B cell (primary cell): ENCODE measurements at regions of chr12 and their contacts with region 1.

Region 1: DNA sequence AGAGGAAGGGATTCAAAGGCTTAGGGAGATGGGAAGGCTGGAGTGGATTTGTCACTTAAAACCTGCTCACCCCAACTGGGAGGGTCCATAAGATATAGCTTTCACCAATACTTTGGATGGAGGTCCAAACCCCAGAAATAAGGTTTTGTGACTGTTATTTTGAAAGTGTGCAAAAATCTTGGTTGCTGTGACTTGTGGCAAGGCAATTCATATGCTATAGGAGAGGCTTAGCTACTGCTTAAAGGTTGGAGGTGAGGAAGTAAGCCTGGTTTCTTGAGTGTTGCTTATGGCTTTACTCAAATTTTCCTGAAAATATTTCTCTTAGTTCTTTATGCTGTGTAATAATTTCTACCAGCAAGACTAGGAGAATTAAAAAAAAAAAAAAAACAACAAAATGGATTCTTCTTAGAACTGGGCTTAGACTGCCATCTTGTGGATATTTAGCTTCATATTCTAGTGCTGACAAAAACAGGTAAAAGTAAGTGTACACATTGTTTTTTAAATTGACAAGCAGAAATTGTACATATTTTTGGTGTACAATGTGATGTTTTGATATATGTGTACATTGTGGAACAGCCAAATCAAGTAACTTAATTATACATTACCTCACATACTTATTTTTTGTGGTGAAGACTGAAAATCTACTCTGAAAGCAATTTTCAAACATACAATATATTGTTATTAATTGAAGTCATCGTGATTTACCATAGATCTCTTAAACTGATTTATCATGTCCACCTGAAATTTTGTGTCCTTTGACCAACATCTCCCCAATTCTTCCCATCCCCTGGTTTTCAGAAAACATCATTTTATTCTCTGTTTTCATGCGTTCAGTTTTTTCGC is 23.0 kb downstream of the PDE6H start:
- DNase-seq: peak; percentile 79
- ATAC-seq: peak; percentile 45
- H3K4me3 ChIP-seq: no peak overlapping the region
- H3K4me3 Mint-ChIP-seq: no peak overlapping the region
- H3K27ac ChIP-seq: no peak overlapping the region
- H3K27ac Mint-ChIP-seq: peak overlapping the region; percentile 38
- H3K4me1 ChIP-seq: peaks cover 34 to 36% of the 10 kb centered on the region in 2 donors
- H3K4me1 Mint-ChIP-seq: peaks cover 39% of the 10 kb centered on the region
- H3K27me3 ChIP-seq: peaks cover 0 to 4% (median 1%) of the 10 kb centered on the region in 4 experiments
- H3K27me3 Mint-ChIP-seq: peaks cover 5% of the 10 kb centered on the region
- CTCF ChIP-seq: peak; percentile 83

Region 2: DNA sequence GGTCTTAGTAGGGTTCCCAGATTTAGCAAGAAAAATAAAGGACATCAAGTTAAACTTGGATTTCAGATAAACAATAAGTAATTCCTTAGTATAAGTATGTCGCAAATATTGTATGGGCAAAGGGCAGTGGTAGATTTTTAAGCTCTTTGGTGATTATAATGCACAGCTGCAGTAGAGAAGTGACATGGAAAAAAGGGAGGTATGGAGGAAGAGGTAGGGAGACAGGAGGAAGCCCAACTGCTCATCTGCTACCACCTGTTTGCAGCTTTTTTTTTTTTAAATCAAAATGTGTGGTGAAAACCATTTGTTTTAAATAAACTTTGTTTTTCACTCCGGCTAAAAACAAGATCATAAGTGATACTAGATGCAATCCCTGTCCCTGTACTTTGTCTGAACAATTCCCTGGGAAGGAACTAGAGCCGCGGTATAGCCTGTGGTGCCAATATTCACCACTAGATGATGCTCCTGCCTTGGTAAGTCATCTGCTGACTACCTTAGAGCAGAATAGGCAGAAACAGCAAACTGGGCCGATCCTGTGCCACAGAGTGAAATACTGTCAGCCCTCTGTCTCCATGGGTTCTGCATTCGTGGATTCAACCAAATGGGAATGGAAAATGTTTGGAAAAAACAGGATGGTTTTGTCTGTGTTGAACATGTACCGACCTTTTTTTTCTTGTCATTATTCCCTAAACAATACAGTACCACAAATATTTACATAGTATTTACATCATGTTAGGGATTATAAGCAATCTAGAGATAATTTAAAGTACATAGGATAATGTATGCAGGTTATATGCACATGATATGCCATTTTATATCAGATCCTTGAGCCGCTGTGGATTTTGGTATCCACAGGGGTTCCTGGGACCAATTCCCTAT is 365.7 kb before region 1 on chr12:
- CTCF ChIA-PET with region 1: interaction called, 8 read pairs
- POLR2A ChIA-PET with region 1: no interaction called
- intact Hi-C with region 1: loop called (anchors 5 kb)
- DNase-seq: peak; percentile 77
- ATAC-seq: peak; percentile 100
- H3K4me3 ChIP-seq: no peak overlapping the region
- H3K4me3 Mint-ChIP-seq: no peak overlapping the region
- H3K27ac ChIP-seq: no peak overlapping the region
- H3K27ac Mint-ChIP-seq: no peak overlapping the region
- H3K4me1 ChIP-seq: no peaks in the 10 kb centered on the region
- H3K4me1 Mint-ChIP-seq: no peaks in the 10 kb centered on the region
- H3K27me3 ChIP-seq: no peaks in the 10 kb centered on the region
- H3K27me3 Mint-ChIP-seq: no peaks in the 10 kb centered on the region
- CTCF ChIP-seq: peak; percentile 98

Region 3: DNA sequence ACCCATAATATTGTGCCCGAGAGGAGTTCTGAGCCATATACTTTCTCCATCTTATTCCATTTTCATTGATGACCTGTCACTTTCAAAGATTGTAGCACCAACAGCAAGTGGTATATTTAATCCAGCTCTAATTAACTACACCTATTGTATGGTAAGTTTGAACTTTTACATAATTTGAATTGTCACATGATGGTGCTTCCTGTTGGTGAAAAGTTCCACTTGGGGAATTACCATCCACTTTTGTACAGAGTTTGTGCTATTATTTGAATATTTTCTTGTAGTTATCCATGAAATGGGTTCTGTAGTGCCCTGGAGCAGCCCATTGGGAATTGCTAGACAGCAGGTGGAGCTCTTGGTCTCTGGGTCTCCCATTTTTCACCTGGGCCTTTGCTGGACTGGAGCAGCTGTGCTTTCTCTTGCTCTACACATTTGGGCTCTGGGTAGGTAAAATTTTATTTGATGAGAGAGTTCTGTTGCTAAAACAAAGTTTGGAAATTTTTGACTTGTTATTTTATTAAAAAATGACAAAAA is 184.8 kb before region 1 on chr12:
- CTCF ChIA-PET with region 1: interaction called, 30 read pairs
- POLR2A ChIA-PET with region 1: no interaction called
- intact Hi-C with region 1: no loop called
- DNase-seq: peak; percentile 35
- ATAC-seq: peak; percentile 28
- H3K4me3 ChIP-seq: no peak overlapping the region
- H3K4me3 Mint-ChIP-seq: peak overlapping the region; percentile 68
- H3K27ac ChIP-seq: no peak overlapping the region
- H3K27ac Mint-ChIP-seq: peak overlapping the region; percentile 50
- H3K4me1 ChIP-seq: peaks cover 9 to 16% of the 10 kb centered on the region in 2 donors
- H3K4me1 Mint-ChIP-seq: peaks cover 13% of the 10 kb centered on the region
- H3K27me3 ChIP-seq: no peaks in the 10 kb centered on the region
- H3K27me3 Mint-ChIP-seq: no peaks in the 10 kb centered on the region
- CTCF ChIP-seq: no peak

Region 4: DNA sequence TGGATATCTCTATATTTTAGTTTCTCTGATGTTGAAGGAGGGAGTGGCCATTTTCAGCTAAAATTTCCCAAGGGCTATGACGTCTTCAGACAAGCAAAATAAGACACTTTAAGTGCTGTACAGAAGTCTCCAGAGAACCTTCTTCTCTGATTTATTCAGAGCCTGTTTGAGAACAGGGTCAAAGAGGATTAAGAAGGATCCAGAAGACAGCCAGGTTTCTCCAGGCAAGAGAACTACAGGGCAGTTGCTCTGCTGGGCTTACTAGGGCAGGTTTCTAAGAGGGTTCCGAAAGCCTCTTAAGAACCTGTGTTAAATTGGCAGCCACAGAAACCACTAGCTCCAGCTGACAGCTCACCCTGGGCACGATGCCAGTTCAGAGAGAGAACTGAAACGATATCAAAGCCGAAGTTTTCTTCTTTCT is 111.3 kb before region 1 on chr12:
- CTCF ChIA-PET with region 1: interaction called, 14 read pairs
- POLR2A ChIA-PET with region 1: no interaction called
- intact Hi-C with region 1: no loop called
- DNase-seq: peak; percentile 89
- ATAC-seq: peak; percentile 95
- H3K4me3 ChIP-seq: peak overlapping the region in 1 of 5 experiments; percentile 11
- H3K4me3 Mint-ChIP-seq: peak overlapping the region; percentile 77
- H3K27ac ChIP-seq: peak overlapping the region in 1 of 2 donors; percentile 67
- H3K27ac Mint-ChIP-seq: peak overlapping the region; percentile 80
- H3K4me1 ChIP-seq: peaks cover 27 to 44% of the 10 kb centered on the region in 2 donors
- H3K4me1 Mint-ChIP-seq: peaks cover 48% of the 10 kb centered on the region
- H3K27me3 ChIP-seq: peaks cover 0 to 12% (median 8%) of the 10 kb centered on the region in 4 experiments
- H3K27me3 Mint-ChIP-seq: peaks cover 38% of the 10 kb centered on the region
- CTCF ChIP-seq: no peak

Region 5: GRCh38 chr12:14948672-14949071 is 47.1 kb before region 1 on chr12:
- CTCF ChIA-PET with region 1: interaction called, 12 read pairs
- POLR2A ChIA-PET with region 1: no interaction called
- intact Hi-C with region 1: loop called (anchors 2 kb)
- DNase-seq: peak; percentile 88
- ATAC-seq: peak; percentile 94
- H3K4me3 ChIP-seq: peak overlapping the region in 3 of 5 experiments; percentile 26 to 53 (median 27)
- H3K4me3 Mint-ChIP-seq: peak overlapping the region; percentile 84
- H3K27ac ChIP-seq: peak overlapping the region; percentile 65 to 94
- H3K27ac Mint-ChIP-seq: peak overlapping the region; percentile 97
- H3K4me1 ChIP-seq: peaks cover 61 to 71% of the 10 kb centered on the region in 2 donors
- H3K4me1 Mint-ChIP-seq: peaks cover 72% of the 10 kb centered on the region
- H3K27me3 ChIP-seq: no peaks in the 10 kb centered on the region
- H3K27me3 Mint-ChIP-seq: no peaks in the 10 kb centered on the region
- CTCF ChIP-seq: no peak

Region 6: GRCh38 chr12:15122344-15122743 is 126.5 kb after region 1 on chr12:
- CTCF ChIA-PET with region 1: no interaction called
- POLR2A ChIA-PET with region 1: no interaction called
- intact Hi-C with region 1: no loop called
- DNase-seq: no peak
- ATAC-seq: no peak
- H3K4me3 ChIP-seq: no peak overlapping the region
- H3K4me3 Mint-ChIP-seq: no peak overlapping the region
- H3K27ac ChIP-seq: no peak overlapping the region
- H3K27ac Mint-ChIP-seq: no peak overlapping the region
- H3K4me1 ChIP-seq: no peaks in the 10 kb centered on the region
- H3K4me1 Mint-ChIP-seq: no peaks in the 10 kb centered on the region
- H3K27me3 ChIP-seq: no peaks in the 10 kb centered on the region
- H3K27me3 Mint-ChIP-seq: peaks cover 7% of the 10 kb centered on the region
- CTCF ChIP-seq: no peak

Region 7: GRCh38 chr12:15220994-15221885 is 225.4 kb after region 1 on chr12 and contains the start of gene RERG:
- CTCF ChIA-PET with region 1: interaction called, 15 read pairs
- POLR2A ChIA-PET with region 1: no interaction called
- intact Hi-C with region 1: loop called (anchors 5 kb)
- DNase-seq: peak; percentile 77
- ATAC-seq: peak; percentile 98
- H3K4me3 ChIP-seq: peak within 1 kb of the TSS in 4 of 5 experiments; percentile 29 to 49 (median 41)
- H3K4me3 Mint-ChIP-seq: peak within 1 kb of the TSS; percentile 79
- H3K27ac ChIP-seq: no peak within 1 kb of the TSS
- H3K27ac Mint-ChIP-seq: no peak within 1 kb of the TSS
- H3K4me1 ChIP-seq: peaks cover 11 to 16% of the 10 kb centered on the region in 2 donors
- H3K4me1 Mint-ChIP-seq: peaks cover 14% of the 10 kb centered on the region
- H3K27me3 ChIP-seq: peaks cover 0 to 39% (median 34%) of the 10 kb centered on the region in 4 experiments
- H3K27me3 Mint-ChIP-seq: peaks cover 44% of the 10 kb centered on the region
- CTCF ChIP-seq: peak; percentile 95
- total RNA-seq, gene RERG: not detected in 2 replicates